Psoas muscle (tissue), 8 donors: ENCODE measurements at regions of chr5 and their contacts with region 1.

Region 1: DNA sequence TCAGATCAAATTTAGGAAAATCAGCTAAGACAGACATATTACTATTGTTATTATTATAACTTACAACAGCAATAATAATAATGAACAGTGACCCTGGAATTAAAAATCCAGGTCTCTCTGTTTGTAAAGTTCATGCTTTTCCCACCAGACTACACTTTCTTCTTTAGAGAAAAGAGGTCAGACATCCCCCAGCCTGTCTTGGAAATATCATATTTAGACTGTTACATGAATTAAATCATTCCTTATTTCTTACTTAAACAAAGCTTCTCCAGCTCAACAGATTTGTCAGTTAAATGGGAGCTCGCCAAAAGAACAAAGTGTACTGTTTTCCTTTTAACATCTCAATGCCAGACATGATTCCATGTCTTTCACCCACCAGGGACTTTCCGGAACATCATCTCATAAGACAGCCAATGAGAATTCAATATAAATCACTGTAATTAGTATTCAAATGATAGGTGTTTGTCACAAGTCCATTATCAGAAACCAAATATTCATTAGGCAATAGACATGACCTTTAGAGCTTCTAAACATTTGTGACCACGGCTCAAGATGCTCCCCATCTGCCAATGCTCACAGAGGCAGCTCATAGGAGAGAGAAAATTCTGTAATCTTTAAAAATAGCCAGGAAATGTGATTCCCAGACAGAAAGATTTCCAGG is 351.9 kb downstream of the ENC1 start:
- DNase-seq: peak; percentile 51 to 76
- ATAC-seq: peak; percentile 90 to 93 (median 91)
- H3K4me3 ChIP-seq: no peak overlapping the region
- H3K27ac ChIP-seq: peak overlapping the region; percentile 88
- H3K4me1 ChIP-seq: peaks cover 46% of the 10 kb centered on the region
- H3K27me3 ChIP-seq: no peaks in the 10 kb centered on the region
- CTCF ChIP-seq: no peak

Region 2: DNA sequence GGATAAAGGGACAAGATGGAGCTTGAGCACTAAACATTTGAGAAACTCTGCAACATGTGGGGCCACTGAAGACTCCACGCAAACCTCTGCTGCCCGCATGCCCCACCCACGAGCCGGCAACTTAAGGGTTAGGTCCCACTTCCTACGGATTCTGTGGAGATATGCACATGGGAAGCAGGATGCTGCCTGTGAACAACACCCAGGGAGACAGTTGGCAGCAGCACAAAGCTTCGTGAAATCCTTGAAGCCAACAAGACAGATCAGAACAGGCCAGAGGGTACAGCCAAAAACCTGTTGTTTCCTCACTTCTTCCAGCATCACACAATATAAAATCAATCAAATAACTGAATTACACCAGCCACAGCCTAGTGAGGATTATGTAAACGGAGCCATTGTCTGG is 81.6 kb after region 1 on chr5:
- intact Hi-C with region 1: loop called in 1 of 2 experiments (anchors 5 kb)
- DNase-seq: peak; percentile 30 to 60
- ATAC-seq: no peak
- H3K4me3 ChIP-seq: no peak overlapping the region
- H3K27ac ChIP-seq: no peak overlapping the region
- H3K4me1 ChIP-seq: peaks cover 15% of the 10 kb centered on the region
- H3K27me3 ChIP-seq: no peaks in the 10 kb centered on the region
- CTCF ChIP-seq: no peak

Region 3: GRCh38 chr5:74408150-74409043 is 119.8 kb after region 1 on chr5:
- intact Hi-C with region 1: no loop called
- DNase-seq: no peak
- ATAC-seq: no peak
- H3K4me3 ChIP-seq: no peak overlapping the region
- H3K27ac ChIP-seq: peak overlapping the region; percentile 77
- H3K4me1 ChIP-seq: peaks cover 56% of the 10 kb centered on the region
- H3K27me3 ChIP-seq: no peaks in the 10 kb centered on the region
- CTCF ChIP-seq: no peak

Region 4: GRCh38 chr5:74851684-74852353 is 563.2 kb after region 1 on chr5:
- intact Hi-C with region 1: no loop called
- DNase-seq: no peak
- ATAC-seq: no peak
- H3K4me3 ChIP-seq: no peak overlapping the region
- H3K27ac ChIP-seq: no peak overlapping the region
- H3K4me1 ChIP-seq: no peaks in the 10 kb centered on the region
- H3K27me3 ChIP-seq: no peaks in the 10 kb centered on the region
- CTCF ChIP-seq: no peak